ENCODE measurements at regions of chr18 and their contacts with region 1.

Region 1: DNA sequence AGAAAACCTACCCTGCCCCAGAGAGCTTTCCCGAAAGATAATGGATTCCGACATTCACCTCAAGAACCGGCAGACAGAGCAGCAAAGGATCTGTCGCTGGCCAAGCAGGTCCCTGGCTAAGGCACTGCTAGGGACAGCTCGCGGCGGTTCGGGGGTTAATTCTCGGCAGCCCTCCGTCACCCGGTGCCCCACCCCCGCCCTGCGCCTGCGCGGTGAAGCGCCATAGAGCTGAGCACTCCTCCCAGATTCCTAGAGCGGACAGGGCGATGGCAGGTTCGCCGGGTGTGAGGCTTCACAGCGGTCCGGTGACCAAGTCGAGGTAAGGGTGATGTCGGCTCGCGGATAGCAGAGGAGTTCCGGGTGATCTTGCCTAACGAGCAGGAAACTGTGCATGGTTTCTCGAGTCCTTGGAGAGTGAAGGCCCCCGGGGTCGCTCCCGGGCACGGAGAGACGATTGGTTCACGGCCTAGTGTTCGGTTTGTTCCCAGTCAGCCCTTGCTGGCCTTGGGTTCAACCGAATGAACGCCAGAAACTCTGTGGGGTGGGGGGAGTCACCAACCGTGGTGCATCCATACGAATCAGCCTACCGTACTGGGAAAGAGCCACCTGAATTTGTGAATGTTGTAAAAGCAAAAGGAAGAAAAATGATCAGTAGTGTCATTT is at the start of gene ZSCAN30:
- DNase-seq: peak; percentile 94 to 96 (median 95)
- H3K4me3 ChIP-seq: peak within 1 kb of the TSS; percentile 84 to 89
- H3K4me3 Mint-ChIP-seq: peak within 1 kb of the TSS; percentile 96 to 100 (median 98)
- H3K27ac ChIP-seq: peak within 1 kb of the TSS; percentile 84
- H3K27ac Mint-ChIP-seq: peak within 1 kb of the TSS; percentile 98 to 100 (median 99)
- H3K4me1 ChIP-seq: peaks cover 36% of the 10 kb centered on the region
- H3K4me1 Mint-ChIP-seq: peaks cover 36 to 60% (median 46%) of the 10 kb centered on the region in 4 donors
- H3K27me3 ChIP-seq: no peaks in the 10 kb centered on the region
- H3K27me3 Mint-ChIP-seq: no peaks in the 10 kb centered on the region
- total RNA-seq, gene ZSCAN30: 16.9 to 18.4 TPM

Region 2: GRCh38 chr18:34976899-34977837 is 313.0 kb before region 1 on chr18:
- CTCF ChIA-PET with region 1: no interaction called
- POLR2A ChIA-PET with region 1: no interaction called
- intact Hi-C with region 1: loop called (anchors 2 kb)
- DNase-seq: peak; percentile 58 to 81 (median 66)
- H3K4me3 ChIP-seq: peak overlapping the region; percentile 60 to 82
- H3K4me3 Mint-ChIP-seq: peak overlapping the region; percentile 90 to 97 (median 94)
- H3K27ac ChIP-seq: no peak overlapping the region
- H3K27ac Mint-ChIP-seq: peak overlapping the region in 4 of 7 donors; percentile 83 to 90 (median 88)
- H3K4me1 ChIP-seq: peaks cover 14% of the 10 kb centered on the region
- H3K4me1 Mint-ChIP-seq: peaks cover 15 to 30% (median 19%) of the 10 kb centered on the region in 4 donors
- H3K27me3 ChIP-seq: peaks cover 9% of the 10 kb centered on the region
- H3K27me3 Mint-ChIP-seq: peaks cover 10 to 12% of the 10 kb centered on the region in 2 donors

Region 3: GRCh38 chr18:35240664-35241447 is 49.3 kb before region 1 on chr18 and contains the start of gene ZNF397:
- CTCF ChIA-PET with region 1: interaction called, 3 read pairs
- POLR2A ChIA-PET with region 1: interaction called, 33 read pairs
- intact Hi-C with region 1: loop called (anchors 1 kb)
- DNase-seq: peak; percentile 91 to 94 (median 92)
- H3K4me3 ChIP-seq: peak within 1 kb of the TSS; percentile 81 to 90
- H3K4me3 Mint-ChIP-seq: peak within 1 kb of the TSS; percentile 96 to 98 (median 96)
- H3K27ac ChIP-seq: peak within 1 kb of the TSS; percentile 95
- H3K27ac Mint-ChIP-seq: peak within 1 kb of the TSS; percentile 94 to 100 (median 99)
- H3K4me1 ChIP-seq: peaks cover 17% of the 10 kb centered on the region
- H3K4me1 Mint-ChIP-seq: peaks cover 10 to 40% (median 15%) of the 10 kb centered on the region in 4 donors
- H3K27me3 ChIP-seq: no peaks in the 10 kb centered on the region
- H3K27me3 Mint-ChIP-seq: no peaks in the 10 kb centered on the region
- total RNA-seq, gene ZNF397: 56.1 to 58.5 TPM

Region 4: DNA sequence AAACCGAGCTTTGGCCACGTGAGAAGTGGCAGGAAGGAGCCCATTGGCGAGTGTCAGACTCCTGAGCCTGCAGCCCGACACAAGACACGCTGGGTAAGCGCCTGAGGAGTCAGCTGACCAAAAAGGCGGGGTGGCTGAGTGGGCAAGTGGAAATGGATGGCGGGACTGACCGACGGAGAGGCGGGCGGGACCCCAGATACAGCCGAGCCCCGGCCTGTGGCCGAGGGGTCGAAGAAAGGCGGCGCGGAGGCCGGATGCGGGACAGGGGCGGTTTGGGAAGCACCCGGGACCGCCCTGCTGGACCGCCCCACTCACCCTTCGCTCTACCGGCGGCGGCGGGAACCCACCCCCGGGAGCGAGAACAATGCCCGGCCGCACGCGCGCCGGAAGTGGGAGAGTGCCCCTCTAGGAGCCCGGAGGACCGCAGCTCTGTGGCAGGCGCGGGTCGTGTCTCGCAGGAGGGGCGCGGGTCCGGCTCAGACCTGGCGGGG is 23.0 kb before region 1 on chr18:
- CTCF ChIA-PET with region 1: interaction called, 15 read pairs
- POLR2A ChIA-PET with region 1: interaction called, 59 read pairs
- intact Hi-C with region 1: loop called (anchors 1 kb)
- DNase-seq: peak; percentile 49 to 69 (median 51)
- H3K4me3 ChIP-seq: peak overlapping the region; percentile 23 to 78
- H3K4me3 Mint-ChIP-seq: peak overlapping the region; percentile 93 to 99 (median 96)
- H3K27ac ChIP-seq: peak overlapping the region; percentile 62
- H3K27ac Mint-ChIP-seq: peak overlapping the region; percentile 83 to 98 (median 96)
- H3K4me1 ChIP-seq: peaks cover 10% of the 10 kb centered on the region
- H3K4me1 Mint-ChIP-seq: peaks cover 17 to 30% (median 25%) of the 10 kb centered on the region in 4 donors
- H3K27me3 ChIP-seq: no peaks in the 10 kb centered on the region
- H3K27me3 Mint-ChIP-seq: no peaks in the 10 kb centered on the region

Region 5: DNA sequence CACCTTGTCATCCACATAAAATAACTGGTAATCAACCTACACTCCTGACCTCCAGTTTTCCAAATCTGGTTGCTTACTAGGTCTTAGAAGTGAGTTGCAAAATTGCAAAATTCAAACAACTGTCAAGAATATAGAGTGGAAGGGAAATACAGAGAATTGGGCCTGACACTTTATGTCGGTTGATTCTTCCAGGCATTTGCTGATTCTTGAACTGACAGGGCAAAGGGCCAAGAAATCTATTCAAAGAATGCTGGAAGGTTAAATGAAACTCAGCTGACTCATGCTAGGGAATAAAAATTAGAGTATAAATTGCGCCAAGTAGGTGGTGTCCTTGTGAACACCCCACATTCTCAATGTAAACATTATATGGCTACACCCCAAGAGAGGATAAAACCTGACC is 21.3 kb after region 1 on chr18:
- CTCF ChIA-PET with region 1: no interaction called
- POLR2A ChIA-PET with region 1: no interaction called
- intact Hi-C with region 1: no loop called
- DNase-seq: no peak
- H3K4me3 ChIP-seq: no peak overlapping the region
- H3K4me3 Mint-ChIP-seq: peak overlapping the region in 1 of 8 donors; percentile 31
- H3K27ac ChIP-seq: no peak overlapping the region
- H3K27ac Mint-ChIP-seq: no peak overlapping the region
- H3K4me1 ChIP-seq: no peaks in the 10 kb centered on the region
- H3K4me1 Mint-ChIP-seq: no peaks in the 10 kb centered on the region
- H3K27me3 ChIP-seq: no peaks in the 10 kb centered on the region
- H3K27me3 Mint-ChIP-seq: no peaks in the 10 kb centered on the region

Region 6: DNA sequence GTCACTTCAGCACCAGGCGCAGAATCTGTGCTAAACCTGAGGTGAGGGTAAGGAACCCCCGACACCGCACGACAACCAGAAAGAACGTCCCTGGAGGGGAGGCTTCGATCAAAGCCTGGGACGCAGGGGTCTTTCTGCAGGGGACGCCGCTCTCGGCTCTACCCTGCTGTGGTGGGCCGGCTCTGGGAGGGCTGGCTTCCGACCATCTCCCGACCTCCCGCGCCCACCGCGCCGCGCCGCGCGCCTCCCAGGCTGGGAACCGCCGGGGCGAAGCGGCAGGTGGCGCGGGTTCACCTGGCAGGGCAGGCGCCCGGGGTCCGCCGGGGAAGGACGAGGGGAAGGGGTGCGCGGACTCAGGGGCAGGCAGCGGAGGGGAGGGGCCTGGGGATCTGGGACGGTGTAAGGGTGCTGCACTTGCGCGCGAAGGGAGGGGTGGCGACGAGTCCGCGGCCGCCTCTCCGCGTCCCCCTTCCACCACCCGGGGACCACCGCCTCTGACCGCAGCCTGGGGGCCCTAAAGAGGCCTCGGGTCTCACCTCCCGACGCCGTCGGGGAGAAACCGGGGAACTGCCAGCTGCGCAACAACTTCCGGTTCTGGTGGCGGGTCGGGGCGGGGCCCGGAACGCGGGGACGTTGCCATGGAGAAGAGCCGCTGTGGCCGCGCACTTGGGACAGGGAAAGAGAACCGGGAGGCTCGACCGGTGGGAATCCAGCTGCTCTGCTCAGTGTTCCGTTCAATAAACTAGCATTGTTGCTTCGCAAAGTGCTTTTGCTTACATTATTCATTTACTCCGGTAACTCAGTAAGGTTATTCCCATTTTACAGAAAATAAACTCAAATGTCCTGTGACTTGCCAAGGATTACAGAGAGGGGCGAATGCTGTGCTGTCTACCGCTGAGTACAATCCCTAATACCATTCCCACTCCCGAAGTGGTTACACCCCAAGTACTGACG is 86.8 kb after region 1 on chr18 and contains the start of gene ZNF396:
- CTCF ChIA-PET with region 1: no interaction called
- POLR2A ChIA-PET with region 1: interaction called, 3 read pairs
- intact Hi-C with region 1: loop called (anchors 1 kb)
- DNase-seq: peak; percentile 57 to 75 (median 65)
- H3K4me3 ChIP-seq: peak within 1 kb of the TSS; percentile 45 to 70
- H3K4me3 Mint-ChIP-seq: peak within 1 kb of the TSS; percentile 82 to 92 (median 88)
- H3K27ac ChIP-seq: peak within 1 kb of the TSS; percentile 34
- H3K27ac Mint-ChIP-seq: peak within 1 kb of the TSS; percentile 37 to 91 (median 86)
- H3K4me1 ChIP-seq: peaks cover 7% of the 10 kb centered on the region
- H3K4me1 Mint-ChIP-seq: peaks cover 0 to 12% (median 2%) of the 10 kb centered on the region in 4 donors
- H3K27me3 ChIP-seq: no peaks in the 10 kb centered on the region
- H3K27me3 Mint-ChIP-seq: peaks cover 0 to 1% of the 10 kb centered on the region in 2 donors
- total RNA-seq, gene ZNF396: 5.5 to 7.3 TPM

Region 7: GRCh38 chr18:35491700-35492077 is 201.5 kb after region 1 on chr18:
- CTCF ChIA-PET with region 1: no interaction called
- POLR2A ChIA-PET with region 1: no interaction called
- intact Hi-C with region 1: no loop called
- DNase-seq: no peak
- H3K4me3 ChIP-seq: no peak overlapping the region
- H3K4me3 Mint-ChIP-seq: no peak overlapping the region
- H3K27ac ChIP-seq: no peak overlapping the region
- H3K27ac Mint-ChIP-seq: no peak overlapping the region
- H3K4me1 ChIP-seq: peaks cover 13% of the 10 kb centered on the region
- H3K4me1 Mint-ChIP-seq: peaks cover 12 to 33% (median 19%) of the 10 kb centered on the region in 4 donors
- H3K27me3 ChIP-seq: no peaks in the 10 kb centered on the region
- H3K27me3 Mint-ChIP-seq: no peaks in the 10 kb centered on the region

Region 8: DNA sequence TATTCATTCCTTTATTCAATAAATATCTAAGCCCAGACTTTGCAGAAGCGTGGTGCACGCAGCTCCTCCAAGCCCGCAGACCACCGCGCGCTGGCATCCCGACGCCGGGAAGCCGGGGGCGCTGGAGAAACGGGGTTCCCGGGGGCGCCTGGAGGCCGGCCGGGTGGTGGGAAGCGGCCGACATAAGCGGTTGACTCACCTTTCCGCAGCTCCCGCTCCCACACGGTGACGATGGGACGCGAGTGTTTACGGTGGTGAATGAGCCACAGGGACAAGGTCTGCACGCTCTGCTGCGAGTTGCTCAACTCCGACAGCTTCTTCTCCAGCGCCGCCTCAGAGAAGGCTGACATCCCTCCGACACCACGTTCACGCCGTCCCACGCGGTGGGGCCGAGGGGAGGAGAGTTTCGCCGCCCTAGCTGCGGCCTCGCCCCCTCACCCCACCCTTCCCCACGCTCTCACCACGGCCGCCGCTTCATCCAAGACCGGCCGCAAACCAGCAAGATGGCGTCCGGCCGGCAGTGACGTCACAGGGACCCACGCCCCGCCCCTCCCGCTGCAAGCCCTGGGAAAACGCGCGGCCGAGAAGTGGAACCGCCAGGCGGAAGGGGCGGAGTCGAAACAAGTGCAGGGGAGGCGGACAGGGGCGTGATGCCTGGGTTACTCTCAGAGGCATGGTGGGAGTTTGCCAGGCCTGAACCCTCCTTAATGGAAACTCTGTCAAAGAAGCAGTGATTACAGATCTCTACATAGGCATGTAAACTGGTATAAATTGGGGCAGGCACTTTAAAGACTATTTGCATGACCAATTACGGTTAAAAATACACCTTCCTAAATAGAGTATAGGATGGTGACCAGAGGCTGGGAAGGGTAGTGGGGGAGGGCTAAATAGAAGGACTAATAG is 777.1 kb after region 1 on chr18 and contains the start of gene RPRD1A:
- CTCF ChIA-PET with region 1: no interaction called
- POLR2A ChIA-PET with region 1: no interaction called
- intact Hi-C with region 1: loop called (anchors 2 kb)
- DNase-seq: peak; percentile 94 to 97 (median 94)
- H3K4me3 ChIP-seq: peak within 1 kb of the TSS; percentile 81 to 87
- H3K4me3 Mint-ChIP-seq: peak within 1 kb of the TSS; percentile 92 to 98 (median 95)
- H3K27ac ChIP-seq: peak within 1 kb of the TSS; percentile 74
- H3K27ac Mint-ChIP-seq: peak within 1 kb of the TSS; percentile 89 to 98 (median 96)
- H3K4me1 ChIP-seq: peaks cover 32% of the 10 kb centered on the region
- H3K4me1 Mint-ChIP-seq: peaks cover 31 to 48% (median 40%) of the 10 kb centered on the region in 4 donors
- H3K27me3 ChIP-seq: no peaks in the 10 kb centered on the region
- H3K27me3 Mint-ChIP-seq: peaks cover 0 to 1% of the 10 kb centered on the region in 2 donors
- total RNA-seq, gene RPRD1A: 40.1 to 42.3 TPM

Region 9: DNA sequence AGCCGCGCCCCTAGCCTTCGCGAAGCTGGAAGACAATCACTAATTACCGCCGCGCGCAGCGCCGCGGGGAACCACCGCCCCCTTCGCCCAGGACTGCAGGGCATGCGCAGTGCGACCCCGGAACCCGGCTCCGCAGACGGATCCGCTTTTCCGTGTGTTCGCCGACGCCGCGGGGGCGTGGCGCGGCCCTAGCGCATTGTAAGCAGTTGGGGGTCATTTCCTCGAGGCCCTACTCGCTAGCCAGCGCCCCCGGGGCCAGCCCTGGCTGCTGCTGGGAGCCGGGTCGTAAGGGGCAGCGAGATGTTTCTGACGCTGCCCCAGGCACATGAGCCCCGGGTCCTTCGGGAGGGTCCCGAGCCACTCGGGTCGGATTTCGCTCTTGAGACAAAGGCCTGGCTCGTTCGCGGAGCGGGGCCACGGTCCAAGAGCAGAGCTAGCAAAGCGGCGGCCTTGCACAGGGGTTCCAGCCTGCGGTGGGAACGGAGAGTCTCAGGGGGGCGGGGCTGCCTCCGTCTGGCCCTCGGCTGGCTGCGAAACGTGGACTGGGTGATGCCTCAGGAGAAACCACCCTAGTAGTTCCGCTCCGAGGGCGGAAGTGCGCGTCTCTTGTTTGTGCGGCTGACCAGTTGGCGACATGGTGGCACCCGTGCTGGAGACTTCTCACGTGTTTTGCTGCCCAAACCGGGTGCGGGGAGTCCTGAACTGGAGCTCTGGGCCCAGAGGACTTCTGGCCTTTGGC is 839.3 kb after region 1 on chr18 and contains the starts of genes ELP2 and SLC39A6:
- CTCF ChIA-PET with region 1: no interaction called
- POLR2A ChIA-PET with region 1: interaction called, 5 read pairs
- intact Hi-C with region 1: loop called (anchors 1 kb)
- DNase-seq: peak; percentile 95
- H3K4me3 ChIP-seq: peak within 1 kb of the TSS; percentile 85 to 90
- H3K4me3 Mint-ChIP-seq: peak within 1 kb of the TSS; percentile 92 to 98 (median 98)
- H3K27ac ChIP-seq: peak within 1 kb of the TSS; percentile 100
- H3K27ac Mint-ChIP-seq: peak within 1 kb of the TSS; percentile 97 to 99 (median 98)
- H3K4me1 ChIP-seq: peaks cover 43% of the 10 kb centered on the region
- H3K4me1 Mint-ChIP-seq: peaks cover 39 to 80% (median 60%) of the 10 kb centered on the region in 4 donors
- H3K27me3 ChIP-seq: no peaks in the 10 kb centered on the region
- H3K27me3 Mint-ChIP-seq: no peaks in the 10 kb centered on the region
- total RNA-seq, gene ELP2: 139 to 143 TPM
- total RNA-seq, gene SLC39A6: 18.9 to 19.7 TPM